K562 (cell line): ENCODE measurements at regions of chr3 and their contacts with region 1.

Region 1: GRCh38 chr3:119463171-119464169 is at the start of gene TMEM39A:
- DNase-seq: peak; percentile 94 to 98 (median 96)
- ATAC-seq: peak; percentile 98
- H3K4me3 ChIP-seq: peak within 1 kb of the TSS; percentile 98
- H3K27ac ChIP-seq: peak within 1 kb of the TSS; percentile 94
- H3K4me1 ChIP-seq: peaks cover 0 to 7% of the 10 kb centered on the region in 2 experiments; a peak in 2 of 5 replicates
- H3K27me3 ChIP-seq: no peaks in the 10 kb centered on the region
- CTCF ChIP-seq: peak in 1 of 3 experiments; percentile 27; a peak in 2 of 6 replicates
- EP300 ChIP-seq: peak; percentile 56
- POLR2A ChIP-seq: peak; percentile 96
- RAD21 ChIP-seq: no peak
- polyA plus RNA-seq, gene TMEM39A: 15.0 to 15.3 TPM

Region 2: DNA sequence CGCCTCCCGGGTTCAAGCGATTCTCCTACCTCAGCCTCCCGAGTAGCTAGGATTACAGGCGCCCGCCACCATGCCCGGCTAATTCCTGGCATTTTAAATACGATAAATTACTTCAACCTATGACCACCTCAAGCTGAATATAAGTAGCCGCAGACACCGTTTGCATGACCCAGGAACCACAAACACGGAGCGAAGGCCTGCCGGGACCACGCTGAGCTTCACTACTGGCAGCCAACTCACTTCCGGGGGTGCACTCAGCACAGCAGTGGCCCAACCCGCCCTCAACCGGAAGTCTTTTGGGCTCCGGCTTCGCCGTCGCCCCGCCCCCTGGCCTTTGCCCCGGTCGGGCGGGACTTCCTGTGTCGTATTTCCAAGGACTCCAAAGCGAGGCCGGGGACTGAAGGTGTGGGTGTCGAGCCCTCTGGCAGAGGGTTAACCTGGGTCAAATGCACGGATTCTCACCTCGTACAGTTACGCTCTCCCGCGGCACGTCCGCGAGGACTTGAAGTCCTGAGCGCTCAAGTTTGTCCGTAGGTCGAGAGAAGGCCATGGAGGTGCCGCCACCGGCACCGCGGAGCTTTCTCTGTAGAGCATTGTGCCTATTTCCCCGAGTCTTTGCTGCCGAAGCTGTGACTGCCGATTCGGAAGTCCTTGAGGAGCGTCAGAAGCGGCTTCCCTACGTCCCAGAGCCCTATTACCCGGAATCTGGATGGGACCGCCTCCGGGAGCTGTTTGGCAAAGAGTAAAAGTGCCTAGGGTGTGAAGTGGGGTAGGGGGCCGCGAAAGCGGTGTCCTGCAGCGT is 34.9 kb after region 1 on chr3 and contains the start of gene TIMMDC1:
- CTCF ChIA-PET with region 1: no interaction called
- POLR2A ChIA-PET with region 1: interaction called, 11 read pairs
- in situ Hi-C with region 1: no loop called
- intact Hi-C with region 1: loop called (anchors 5 kb)
- DNase-seq: peak; percentile 90 to 96 (median 92)
- ATAC-seq: peak; percentile 91
- H3K4me3 ChIP-seq: peak within 1 kb of the TSS; percentile 70
- H3K27ac ChIP-seq: peak within 1 kb of the TSS; percentile 94
- H3K4me1 ChIP-seq: no peaks in the 10 kb centered on the region; a peak in 1 of 5 replicates
- H3K27me3 ChIP-seq: no peaks in the 10 kb centered on the region
- CTCF ChIP-seq: no peak
- EP300 ChIP-seq: no peak
- POLR2A ChIP-seq: peak; percentile 90
- RAD21 ChIP-seq: no peak
- polyA plus RNA-seq, gene TIMMDC1: 224 to 226 TPM